ENCODE measurements at regions of chr4 and their contacts with region 1.

Region 1: GRCh38 chr4:10063544-10064300 is 42.4 kb upstream of the SLC2A9 start:
- DNase-seq: peak; percentile 67 to 72
- H3K4me3 ChIP-seq: no peak overlapping the region
- H3K4me3 Mint-ChIP-seq: no peak overlapping the region
- H3K27ac Mint-ChIP-seq: no peak overlapping the region
- H3K4me1 ChIP-seq: no peaks in the 10 kb centered on the region; the same call in 1 of the 2 replicates
- H3K4me1 Mint-ChIP-seq: no peaks in the 10 kb centered on the region
- H3K27me3 ChIP-seq: no peaks in the 10 kb centered on the region
- H3K27me3 Mint-ChIP-seq: no peaks in the 10 kb centered on the region
- CTCF ChIP-seq: peak; percentile 56 to 79

Region 2: DNA sequence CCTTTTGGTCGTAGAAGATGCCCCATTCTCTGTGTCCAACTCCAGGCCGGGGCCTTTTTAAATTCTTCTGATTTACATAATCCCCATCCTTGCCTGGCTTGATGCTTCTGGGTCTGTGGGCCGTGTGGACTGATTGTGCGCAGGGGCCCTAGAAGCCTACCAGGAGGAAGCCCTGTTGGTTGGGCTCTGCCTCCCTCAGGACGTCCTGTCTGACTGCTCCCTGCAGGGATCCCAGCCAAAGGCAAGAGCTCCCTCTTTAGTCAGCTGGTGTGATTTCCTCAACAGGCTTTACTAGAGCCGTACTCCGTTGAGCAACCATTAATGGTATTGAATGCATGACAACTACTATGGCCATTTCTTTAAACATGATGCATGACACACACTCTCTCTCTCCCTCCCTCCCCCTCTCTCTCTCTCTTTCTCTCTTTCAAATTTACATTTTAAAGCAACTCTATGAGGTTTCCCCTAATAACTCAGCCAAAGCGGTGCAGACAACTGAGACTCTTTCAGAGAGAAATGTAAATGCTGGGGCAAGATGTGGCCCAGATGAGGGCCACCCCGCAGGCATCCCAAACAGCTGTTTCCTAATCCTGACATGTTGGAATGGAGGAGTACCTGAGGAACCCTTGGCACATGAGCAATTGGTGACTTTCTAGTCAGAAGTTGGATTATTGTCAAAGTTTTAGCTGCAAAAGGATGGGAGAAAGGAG is 165.0 kb before region 1 on chr4:
- CTCF ChIA-PET with region 1: no interaction called
- POLR2A ChIA-PET with region 1: interaction called, 5 read pairs
- intact Hi-C with region 1: loop called (anchors 2 kb)
- DNase-seq: peak; percentile 57 to 58
- H3K4me3 ChIP-seq: no peak overlapping the region
- H3K4me3 Mint-ChIP-seq: no peak overlapping the region
- H3K27ac Mint-ChIP-seq: no peak overlapping the region
- H3K4me1 ChIP-seq: no peaks in the 10 kb centered on the region
- H3K4me1 Mint-ChIP-seq: no peaks in the 10 kb centered on the region
- H3K27me3 ChIP-seq: no peaks in the 10 kb centered on the region
- H3K27me3 Mint-ChIP-seq: no peaks in the 10 kb centered on the region
- CTCF ChIP-seq: peak; percentile 22 to 49

Region 3: DNA sequence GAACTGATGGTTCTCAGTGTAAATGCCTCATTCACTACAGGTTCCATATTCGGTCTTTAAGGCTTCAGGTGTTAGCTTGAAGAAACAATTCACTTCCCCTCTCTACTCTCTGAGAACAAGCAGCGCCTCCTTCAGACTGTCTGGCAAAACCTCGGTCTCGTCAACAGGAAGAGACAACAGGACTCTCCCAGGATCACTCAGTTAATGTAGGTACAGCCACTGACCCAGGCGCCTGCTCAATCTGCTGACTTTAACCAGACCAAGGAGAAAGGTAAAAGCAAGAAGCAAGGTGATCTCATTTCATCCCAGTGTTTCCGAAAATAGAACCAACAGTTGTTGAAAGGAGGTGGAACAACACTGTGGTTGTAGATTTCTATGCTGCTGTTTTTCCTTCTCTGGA is 144.7 kb before region 1 on chr4:
- CTCF ChIA-PET with region 1: no interaction called
- POLR2A ChIA-PET with region 1: no interaction called
- intact Hi-C with region 1: loop called (anchors 5 kb)
- DNase-seq: no peak
- H3K4me3 ChIP-seq: no peak overlapping the region
- H3K4me3 Mint-ChIP-seq: no peak overlapping the region
- H3K27ac Mint-ChIP-seq: no peak overlapping the region
- H3K4me1 ChIP-seq: no peaks in the 10 kb centered on the region
- H3K4me1 Mint-ChIP-seq: no peaks in the 10 kb centered on the region
- H3K27me3 ChIP-seq: no peaks in the 10 kb centered on the region
- H3K27me3 Mint-ChIP-seq: no peaks in the 10 kb centered on the region
- CTCF ChIP-seq: no peak

Region 4: DNA sequence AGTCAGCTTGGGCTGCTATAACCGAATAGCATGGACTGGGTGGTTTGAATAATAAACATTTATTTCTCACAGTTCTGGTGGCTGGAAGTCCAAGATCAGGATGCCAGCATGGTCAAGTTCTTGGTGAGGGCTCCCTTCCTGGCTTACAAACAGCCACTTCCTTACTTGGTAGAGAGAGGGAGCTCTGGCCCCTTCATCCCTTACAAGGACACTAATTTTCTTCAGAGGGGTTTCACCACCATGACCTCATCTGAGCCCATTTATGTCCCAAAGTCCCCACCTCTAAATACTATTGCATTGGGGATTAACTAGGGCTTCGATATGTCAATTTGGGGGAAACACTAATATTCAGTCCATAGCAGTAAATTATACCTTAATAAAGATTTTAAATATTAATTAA is 559.0 kb after region 1 on chr4:
- CTCF ChIA-PET with region 1: no interaction called
- POLR2A ChIA-PET with region 1: no interaction called
- intact Hi-C with region 1: no loop called
- DNase-seq: no peak
- H3K4me3 ChIP-seq: no peak overlapping the region
- H3K4me3 Mint-ChIP-seq: no peak overlapping the region
- H3K27ac Mint-ChIP-seq: no peak overlapping the region
- H3K4me1 ChIP-seq: peaks cover 29% of the 10 kb centered on the region
- H3K4me1 Mint-ChIP-seq: peaks cover 20% of the 10 kb centered on the region
- H3K27me3 ChIP-seq: no peaks in the 10 kb centered on the region
- H3K27me3 Mint-ChIP-seq: no peaks in the 10 kb centered on the region
- CTCF ChIP-seq: no peak

Region 5: GRCh38 chr4:10816571-10816970 is 752.8 kb after region 1 on chr4:
- CTCF ChIA-PET with region 1: no interaction called
- POLR2A ChIA-PET with region 1: no interaction called
- intact Hi-C with region 1: no loop called
- DNase-seq: no peak
- H3K4me3 ChIP-seq: no peak overlapping the region
- H3K4me3 Mint-ChIP-seq: no peak overlapping the region
- H3K27ac Mint-ChIP-seq: no peak overlapping the region
- H3K4me1 ChIP-seq: no peaks in the 10 kb centered on the region
- H3K4me1 Mint-ChIP-seq: no peaks in the 10 kb centered on the region
- H3K27me3 ChIP-seq: no peaks in the 10 kb centered on the region
- H3K27me3 Mint-ChIP-seq: no peaks in the 10 kb centered on the region
- CTCF ChIP-seq: no peak